ENCODE measurements at regions of chr5 and their contacts with region 1.

Region 1: GRCh38 chr5:59790399-59791125 is 103.0 kb downstream of the PDE4D start:
- DNase-seq: no peak
- ATAC-seq: peak; percentile 17
- H3K4me3 ChIP-seq: no peak overlapping the region
- H3K27ac ChIP-seq: peak overlapping the region in 1 of 2 donors; percentile 45
- H3K4me1 ChIP-seq: no peaks in the 10 kb centered on the region
- H3K27me3 ChIP-seq: no peaks in the 10 kb centered on the region
- CTCF ChIP-seq: no peak

Region 2: DNA sequence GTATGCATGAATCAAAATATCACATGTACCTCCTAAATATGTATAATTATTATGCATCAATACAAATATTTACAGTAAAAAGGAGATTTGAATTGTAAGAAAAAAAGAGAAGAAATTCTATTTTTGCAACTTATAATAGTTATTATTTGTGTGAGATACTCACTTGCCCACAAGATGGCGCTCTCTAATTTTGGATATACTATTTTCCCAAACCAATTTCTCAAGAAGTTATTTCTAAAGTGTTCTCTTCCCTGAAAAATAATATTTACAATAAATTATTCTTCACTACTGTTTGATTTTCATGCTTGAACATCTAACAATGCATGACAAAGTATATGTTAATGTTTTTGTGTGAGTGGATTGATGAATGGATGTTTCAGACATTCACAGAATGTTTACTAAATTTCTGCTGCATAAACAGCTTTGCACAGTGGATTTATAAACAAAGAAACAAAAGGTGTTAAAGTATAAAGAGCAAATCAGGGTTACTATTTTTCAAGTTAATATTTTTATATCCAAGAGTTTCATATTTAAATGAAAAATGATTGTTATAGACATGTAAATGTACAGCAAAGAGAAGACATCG is 400.4 kb before region 1 on chr5:
- intact Hi-C with region 1: loop called in 1 of 2 experiments (anchors 5 kb)
- DNase-seq: peak in 2 of 4 donors; percentile 31 to 58
- ATAC-seq: peak; percentile 66
- H3K4me3 ChIP-seq: no peak overlapping the region
- H3K27ac ChIP-seq: no peak overlapping the region
- H3K4me1 ChIP-seq: no peaks in the 10 kb centered on the region
- H3K27me3 ChIP-seq: no peaks in the 10 kb centered on the region
- CTCF ChIP-seq: peak; percentile 48 to 56